ENCODE measurements at regions of chr3 and their contacts with region 1.

Region 1: DNA sequence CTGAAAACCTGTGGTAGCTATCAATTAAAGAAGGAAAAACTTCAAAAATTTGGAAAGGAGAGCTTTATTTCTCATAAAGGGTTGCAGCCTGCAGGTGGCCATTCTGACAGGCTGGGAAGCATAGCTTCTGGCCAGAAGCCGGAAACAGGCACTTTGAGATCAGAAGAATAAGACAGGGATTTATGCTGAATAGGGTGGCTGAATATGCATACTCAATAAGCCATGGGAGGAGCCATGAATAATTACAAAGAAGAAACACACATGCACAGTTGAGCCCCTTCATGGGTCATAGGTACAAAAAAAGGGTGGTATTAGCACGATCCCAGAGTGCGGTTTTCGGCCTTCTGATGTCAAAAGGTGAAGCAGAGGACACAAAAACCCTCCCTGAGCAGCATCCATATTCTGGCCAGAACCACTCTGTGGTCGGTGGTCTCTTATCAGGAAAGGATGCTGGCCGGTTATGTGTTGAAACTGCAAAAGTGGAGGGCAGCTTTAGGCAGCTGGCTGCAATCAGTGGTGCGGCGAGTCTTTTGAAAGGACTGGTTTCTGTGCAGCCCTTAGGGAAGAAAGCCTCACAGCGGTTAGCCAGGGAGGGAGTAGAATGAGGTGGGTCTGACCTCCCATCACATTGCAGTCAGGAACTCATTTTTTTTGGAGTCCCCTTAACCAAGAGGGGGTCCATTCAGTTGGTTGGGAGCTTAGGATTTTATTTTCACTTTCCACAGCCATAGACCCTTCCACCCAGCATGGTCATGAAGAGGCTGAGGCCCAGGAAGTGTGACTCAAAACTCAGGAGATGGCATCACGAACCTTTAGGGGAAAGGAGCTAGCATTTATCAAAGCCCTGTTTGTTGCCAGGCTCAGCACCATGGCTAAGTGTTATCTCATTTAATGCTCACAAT is 34.7 kb upstream of the CCDC174 start:
- DNase-seq: no peak
- ATAC-seq: 0 out of 6 replicates have a peak, but pooled peaks of 1 of the 2 experiments have one; percentile 33
- H3K4me3 ChIP-seq: no peak overlapping the region
- H3K27ac ChIP-seq: no peak overlapping the region
- H3K4me1 ChIP-seq: peaks cover 8% of the 10 kb centered on the region; the same call in 2 of the 3 replicates
- CTCF ChIP-seq: no peak
- EP300 ChIP-seq: no peak
- POLR2A ChIP-seq: no peak
- RAD21 ChIP-seq: no peak

Region 2: DNA sequence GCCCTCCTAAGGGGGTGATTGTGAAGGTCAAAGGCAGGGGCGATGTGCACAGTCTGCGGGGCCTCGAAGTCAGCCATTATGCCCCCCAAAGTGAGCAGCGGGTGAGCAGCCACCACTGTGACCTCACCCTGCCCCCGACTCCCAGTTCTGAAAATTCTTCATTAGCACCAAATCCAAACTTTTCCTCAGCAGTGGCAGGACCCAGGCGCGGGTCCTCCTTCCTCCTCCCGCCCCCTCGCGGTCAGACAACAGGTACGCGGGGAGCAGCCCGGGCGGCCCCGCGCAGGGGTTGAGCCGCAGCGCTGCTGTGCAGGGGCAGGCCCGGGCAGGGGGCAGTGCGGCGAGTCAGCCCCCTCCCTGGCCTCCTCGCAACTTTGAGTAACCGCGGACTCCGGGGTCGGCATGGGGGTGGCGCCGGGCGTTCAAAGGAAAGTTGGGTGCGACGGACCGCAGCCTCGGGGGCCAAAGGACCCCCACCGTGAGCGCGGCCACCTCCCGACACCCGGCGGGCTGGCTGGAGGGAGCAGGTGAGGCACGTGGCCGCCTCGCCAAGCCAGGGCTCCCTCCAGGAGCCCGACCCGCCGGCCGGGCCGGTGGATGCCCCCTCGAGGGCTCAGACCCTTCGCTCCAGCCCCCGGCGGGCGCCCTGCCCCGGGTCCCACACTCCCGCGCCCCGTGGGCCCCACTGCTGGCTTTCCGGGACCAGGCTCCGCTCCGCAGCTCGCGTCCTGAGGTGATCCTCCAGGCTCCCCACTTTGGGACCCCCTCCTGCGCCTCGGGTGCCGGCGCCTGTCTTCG is 14.7 kb before region 1 on chr3:
- CTCF ChIA-PET with region 1: interaction called, 17 read pairs
- POLR2A ChIA-PET with region 1: no interaction called
- DNase-seq: peak; percentile 30 to 63
- ATAC-seq: peak; percentile 63 to 82; a peak in 4 of 6 replicates
- H3K4me3 ChIP-seq: peak overlapping the region; percentile 57
- H3K27ac ChIP-seq: peak overlapping the region; percentile 48 to 86
- H3K4me1 ChIP-seq: peaks cover 12% of the 10 kb centered on the region; the same call in 1 of the 3 replicates
- CTCF ChIP-seq: peak; percentile 47
- EP300 ChIP-seq: no peak
- POLR2A ChIP-seq: no peak
- RAD21 ChIP-seq: peak; percentile 21 to 47; a peak in 3 of 5 replicates